Activated CD4-positive, alpha-beta T cell treated with anti-CD3 and anti-CD28 coated beads, Interleukin-2, amount 10 ng/mL, durations not matched to agents 24 days and 14 days (primary cell): ENCODE measurements at regions of chr14 and their contacts with region 1.

Region 1: DNA sequence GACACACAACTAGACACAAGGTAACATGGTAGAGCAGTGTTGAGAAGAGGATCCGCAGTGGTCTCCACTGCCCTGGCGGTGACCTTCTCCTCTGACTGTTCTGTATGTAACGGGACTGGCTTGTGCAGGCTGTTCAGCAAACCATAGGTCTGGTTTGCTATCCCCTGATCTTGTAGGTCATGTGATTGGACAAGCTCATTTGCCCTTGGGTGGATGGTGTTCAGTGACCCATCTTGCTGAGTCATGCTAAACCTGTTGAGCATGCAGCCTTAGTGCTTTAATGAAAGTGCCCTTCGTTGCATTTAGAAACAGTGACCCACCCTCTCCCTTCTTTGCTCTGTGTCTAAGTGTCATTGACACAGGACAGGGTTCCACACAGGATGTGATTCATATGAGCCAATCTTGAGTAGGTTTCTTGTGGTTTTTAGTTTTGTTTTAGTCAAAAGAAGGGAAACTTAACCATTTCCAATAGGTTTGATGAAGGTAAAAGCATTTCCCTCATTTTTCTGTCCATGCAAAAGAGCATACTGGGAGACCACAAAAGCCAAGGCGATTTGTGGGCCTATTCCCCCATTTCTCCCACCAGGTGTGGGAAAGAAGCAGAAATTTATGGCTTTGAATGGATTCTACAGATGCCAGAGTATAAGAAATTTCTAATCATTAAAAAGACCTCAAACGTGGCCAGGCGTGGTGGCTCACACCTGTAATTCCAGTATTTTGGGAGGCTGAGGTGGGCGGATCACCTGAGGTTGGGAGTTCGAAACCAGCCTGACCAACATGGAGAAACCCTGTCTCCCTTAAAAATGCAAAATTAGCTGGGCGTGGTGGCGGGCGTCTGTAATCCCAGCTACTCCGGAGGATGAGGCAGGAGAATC is 32.6 kb upstream of the HIF1A start:
- DNase-seq: peak; percentile 90
- H3K4me3 Mint-ChIP-seq: peak overlapping the region; percentile 70
- H3K27ac Mint-ChIP-seq: peak overlapping the region; percentile 95
- H3K4me1 Mint-ChIP-seq: peaks cover 66% of the 10 kb centered on the region
- H3K27me3 Mint-ChIP-seq: no peaks in the 10 kb centered on the region

Region 2: GRCh38 chr14:61342486-61342885 is 320.2 kb before region 1 on chr14:
- intact Hi-C with region 1: loop called (anchors 5 kb)
- DNase-seq: peak; percentile 96
- H3K4me3 Mint-ChIP-seq: peak overlapping the region; percentile 86
- H3K27ac Mint-ChIP-seq: peak overlapping the region; percentile 95
- H3K4me1 Mint-ChIP-seq: peaks cover 80% of the 10 kb centered on the region
- H3K27me3 Mint-ChIP-seq: no peaks in the 10 kb centered on the region

Region 3: DNA sequence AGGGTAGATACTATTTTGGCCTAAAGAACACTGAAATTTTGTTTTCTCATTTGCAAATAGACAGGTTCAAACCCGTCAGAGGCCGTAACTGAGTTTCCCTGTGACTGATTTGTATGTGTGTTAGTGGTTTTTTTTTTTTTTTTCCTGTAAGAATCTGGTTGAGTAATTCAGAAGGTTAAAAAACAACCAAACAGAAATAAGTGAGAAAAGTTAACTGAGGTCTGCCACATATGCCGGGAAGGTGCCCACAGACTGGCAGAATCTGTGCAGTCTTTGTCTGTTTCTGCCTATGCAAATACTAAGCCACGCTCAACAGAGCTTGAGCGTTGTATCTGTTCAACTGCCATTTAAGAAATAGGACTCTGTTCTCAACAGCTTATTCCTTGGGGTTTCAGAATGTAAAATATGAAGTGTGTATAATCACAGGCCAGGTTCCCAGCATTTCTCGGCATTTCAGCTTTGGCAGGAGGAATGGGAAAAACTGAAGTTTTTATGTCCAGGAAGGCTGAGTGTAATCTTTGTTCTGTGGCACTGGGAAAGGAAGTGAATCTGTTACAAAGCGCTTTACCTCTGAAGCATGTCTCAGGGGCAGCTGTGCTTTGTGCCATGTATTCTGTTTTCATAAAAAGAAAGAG is 159.4 kb before region 1 on chr14:
- intact Hi-C with region 1: loop called (anchors 1 kb)
- DNase-seq: peak; percentile 84
- H3K4me3 Mint-ChIP-seq: peak overlapping the region; percentile 76
- H3K27ac Mint-ChIP-seq: peak overlapping the region; percentile 95
- H3K4me1 Mint-ChIP-seq: peaks cover 79% of the 10 kb centered on the region
- H3K27me3 Mint-ChIP-seq: no peaks in the 10 kb centered on the region

Region 4: GRCh38 chr14:61525293-61526011 is 137.2 kb before region 1 on chr14:
- intact Hi-C with region 1: loop called (anchors 1 kb)
- DNase-seq: peak; percentile 87
- H3K4me3 Mint-ChIP-seq: peak overlapping the region; percentile 66
- H3K27ac Mint-ChIP-seq: peak overlapping the region; percentile 65
- H3K4me1 Mint-ChIP-seq: peaks cover 77% of the 10 kb centered on the region
- H3K27me3 Mint-ChIP-seq: no peaks in the 10 kb centered on the region

Region 5: GRCh38 chr14:61568572-61569131 is 94.0 kb before region 1 on chr14:
- intact Hi-C with region 1: loop called (anchors 2 kb)
- DNase-seq: peak; percentile 88
- H3K4me3 Mint-ChIP-seq: peak overlapping the region; percentile 77
- H3K27ac Mint-ChIP-seq: peak overlapping the region; percentile 56
- H3K4me1 Mint-ChIP-seq: peaks cover 77% of the 10 kb centered on the region
- H3K27me3 Mint-ChIP-seq: peaks cover 4% of the 10 kb centered on the region

Region 6: DNA sequence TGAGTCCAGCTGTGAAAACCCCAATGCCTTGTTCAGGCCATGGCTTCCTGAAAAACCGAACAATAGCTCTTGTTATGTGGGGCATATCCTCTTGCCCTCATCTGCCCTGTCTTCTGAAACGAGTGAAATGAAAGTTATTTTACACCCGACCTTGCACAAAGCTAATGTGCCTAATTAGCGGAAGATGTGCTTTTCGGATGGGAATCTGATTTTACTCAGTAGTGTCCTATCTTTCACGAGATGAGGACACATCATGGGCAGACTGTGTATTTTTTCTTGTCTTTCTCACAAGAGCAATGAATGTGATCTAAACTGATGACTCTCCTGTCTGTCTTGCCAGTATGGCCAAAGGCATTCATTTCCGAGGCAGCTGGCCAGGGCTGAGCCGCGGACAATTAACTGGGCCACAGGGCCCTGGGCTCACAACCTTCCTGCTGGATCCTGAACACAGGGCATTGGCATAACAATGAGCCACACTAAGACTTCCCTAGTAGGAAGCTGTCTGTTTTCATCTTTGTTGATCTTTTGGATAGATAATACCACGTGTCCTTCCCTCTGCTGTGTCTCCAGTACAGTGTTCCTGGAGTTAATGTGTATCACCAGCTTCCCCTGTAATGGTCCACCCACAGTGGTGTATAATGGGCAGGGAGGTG is 53.4 kb before region 1 on chr14:
- intact Hi-C with region 1: no loop called
- DNase-seq: no peak
- H3K4me3 Mint-ChIP-seq: no peak overlapping the region
- H3K27ac Mint-ChIP-seq: no peak overlapping the region
- H3K4me1 Mint-ChIP-seq: peaks cover 6% of the 10 kb centered on the region
- H3K27me3 Mint-ChIP-seq: no peaks in the 10 kb centered on the region

Region 7: GRCh38 chr14:61620130-61620946 is 42.3 kb before region 1 on chr14:
- intact Hi-C with region 1: loop called (anchors 1 kb)
- DNase-seq: peak; percentile 69
- H3K4me3 Mint-ChIP-seq: peak overlapping the region; percentile 39
- H3K27ac Mint-ChIP-seq: peak overlapping the region; percentile 74
- H3K4me1 Mint-ChIP-seq: peaks cover 34% of the 10 kb centered on the region
- H3K27me3 Mint-ChIP-seq: no peaks in the 10 kb centered on the region

Region 8: DNA sequence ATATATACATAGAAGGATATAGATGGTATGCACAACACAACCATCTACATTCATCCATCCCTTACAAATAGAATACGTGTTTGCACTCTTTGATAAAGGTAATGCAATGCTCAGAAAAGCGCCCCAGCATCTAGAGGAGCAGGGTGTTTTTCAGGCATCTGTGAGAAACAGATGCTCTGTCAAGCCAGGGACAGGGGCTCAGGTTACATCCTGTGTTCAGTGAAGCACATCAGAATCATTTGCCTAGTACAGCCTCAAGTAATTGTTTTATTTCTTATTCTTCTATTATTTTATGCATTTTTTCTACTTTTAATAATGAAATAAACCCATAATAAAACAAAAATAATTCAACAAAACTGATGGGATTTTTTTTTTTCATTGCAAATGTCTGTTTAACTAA is 17.8 kb before region 1 on chr14:
- intact Hi-C with region 1: no loop called
- DNase-seq: peak; percentile 50
- H3K4me3 Mint-ChIP-seq: no peak overlapping the region
- H3K27ac Mint-ChIP-seq: no peak overlapping the region
- H3K4me1 Mint-ChIP-seq: peaks cover 18% of the 10 kb centered on the region
- H3K27me3 Mint-ChIP-seq: no peaks in the 10 kb centered on the region

Region 9: GRCh38 chr14:61750708-61751474 is 88.2 kb after region 1 on chr14:
- intact Hi-C with region 1: no loop called
- DNase-seq: peak; percentile 97
- H3K4me3 Mint-ChIP-seq: peak overlapping the region; percentile 98
- H3K27ac Mint-ChIP-seq: peak overlapping the region; percentile 94
- H3K4me1 Mint-ChIP-seq: peaks cover 49% of the 10 kb centered on the region
- H3K27me3 Mint-ChIP-seq: no peaks in the 10 kb centered on the region

Region 10: GRCh38 chr14:61812761-61813606 is 150.3 kb after region 1 on chr14:
- intact Hi-C with region 1: no loop called
- DNase-seq: peak; percentile 71
- H3K4me3 Mint-ChIP-seq: peak overlapping the region; percentile 74
- H3K27ac Mint-ChIP-seq: no peak overlapping the region
- H3K4me1 Mint-ChIP-seq: peaks cover 12% of the 10 kb centered on the region
- H3K27me3 Mint-ChIP-seq: peaks cover 77% of the 10 kb centered on the region